ENCODE measurements at regions of chr4 and their contacts with region 1.

Region 1: GRCh38 chr4:186137196-186137794 is 32.8 kb downstream of the FAM149A start:
- DNase-seq: no peak
- H3K4me3 ChIP-seq: no peak overlapping the region
- H3K4me3 Mint-ChIP-seq: no peak overlapping the region
- H3K27ac ChIP-seq: no peak overlapping the region
- H3K27ac Mint-ChIP-seq: peak overlapping the region in 1 of 8 donors; percentile 19
- H3K4me1 ChIP-seq: no peaks in the 10 kb centered on the region
- H3K4me1 Mint-ChIP-seq: peaks cover 0 to 9% (median 2%) of the 10 kb centered on the region in 3 donors
- H3K27me3 ChIP-seq: no peaks in the 10 kb centered on the region
- H3K27me3 Mint-ChIP-seq: peaks cover 4 to 11% of the 10 kb centered on the region in 2 donors

Region 2: DNA sequence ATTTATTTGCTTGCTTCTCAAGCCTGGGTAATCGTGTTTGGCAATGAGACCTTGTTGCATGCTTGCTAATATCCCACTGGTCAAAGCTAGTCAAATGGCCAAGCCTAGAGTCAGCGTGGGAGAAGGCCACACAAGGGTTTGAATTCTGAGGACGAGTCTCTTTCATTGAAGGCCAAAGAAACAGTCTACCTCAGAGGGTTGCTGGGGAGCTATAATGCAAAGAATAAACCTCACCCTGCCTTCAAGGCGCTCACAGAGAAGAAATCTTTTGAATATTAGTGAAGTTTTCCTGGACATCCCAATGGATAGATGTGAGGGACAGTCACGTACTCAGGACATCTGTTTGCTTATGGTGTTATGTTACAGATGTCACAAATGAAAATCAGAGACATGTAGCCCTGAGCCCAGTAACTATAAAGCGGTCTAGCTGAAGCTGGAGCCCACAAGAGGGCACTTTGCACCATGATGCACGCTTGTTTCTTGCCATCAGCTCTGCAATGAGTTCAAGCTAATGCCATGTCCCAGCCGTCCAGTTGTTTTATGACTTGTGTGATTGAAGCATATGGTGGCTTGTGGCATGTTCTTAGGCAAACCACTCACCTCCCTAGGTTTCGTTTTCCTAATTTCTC is 69.4 kb before region 1 on chr4:
- CTCF ChIA-PET with region 1: interaction called, 13 read pairs
- POLR2A ChIA-PET with region 1: no interaction called
- DNase-seq: peak in 4 of 5 donors; percentile 3 to 57 (median 19)
- H3K4me3 ChIP-seq: peak overlapping the region; percentile 67
- H3K4me3 Mint-ChIP-seq: peak overlapping the region; percentile 73 to 89 (median 82)
- H3K27ac ChIP-seq: no peak overlapping the region
- H3K27ac Mint-ChIP-seq: peak overlapping the region in 3 of 8 donors; percentile 78 to 86 (median 82)
- H3K4me1 ChIP-seq: peaks cover 16% of the 10 kb centered on the region
- H3K4me1 Mint-ChIP-seq: peaks cover 25 to 36% (median 28%) of the 10 kb centered on the region in 3 donors
- H3K27me3 ChIP-seq: no peaks in the 10 kb centered on the region
- H3K27me3 Mint-ChIP-seq: peaks cover 3 to 24% of the 10 kb centered on the region in 2 donors